Endothelial cell of umbilical vein (primary cell): ENCODE measurements at regions of chr9 and their contacts with region 1.

Region 1: GRCh38 chr9:135961277-135961705 is at the start of gene UBAC1:
- DNase-seq: peak; percentile 95
- H3K4me3 ChIP-seq: peak within 1 kb of the TSS; percentile 71 to 97 (median 78)
- H3K27ac ChIP-seq: no peak within 1 kb of the TSS
- H3K4me1 ChIP-seq: peaks cover 8% of the 10 kb centered on the region
- H3K27me3 ChIP-seq: no peaks in the 10 kb centered on the region
- CTCF ChIP-seq: peak; percentile 27 to 60
- POLR2A ChIP-seq: peak; percentile 32
- total RNA-seq, gene UBAC1: 36.5 and 39.5 TPM in 2 replicates

Region 2: DNA sequence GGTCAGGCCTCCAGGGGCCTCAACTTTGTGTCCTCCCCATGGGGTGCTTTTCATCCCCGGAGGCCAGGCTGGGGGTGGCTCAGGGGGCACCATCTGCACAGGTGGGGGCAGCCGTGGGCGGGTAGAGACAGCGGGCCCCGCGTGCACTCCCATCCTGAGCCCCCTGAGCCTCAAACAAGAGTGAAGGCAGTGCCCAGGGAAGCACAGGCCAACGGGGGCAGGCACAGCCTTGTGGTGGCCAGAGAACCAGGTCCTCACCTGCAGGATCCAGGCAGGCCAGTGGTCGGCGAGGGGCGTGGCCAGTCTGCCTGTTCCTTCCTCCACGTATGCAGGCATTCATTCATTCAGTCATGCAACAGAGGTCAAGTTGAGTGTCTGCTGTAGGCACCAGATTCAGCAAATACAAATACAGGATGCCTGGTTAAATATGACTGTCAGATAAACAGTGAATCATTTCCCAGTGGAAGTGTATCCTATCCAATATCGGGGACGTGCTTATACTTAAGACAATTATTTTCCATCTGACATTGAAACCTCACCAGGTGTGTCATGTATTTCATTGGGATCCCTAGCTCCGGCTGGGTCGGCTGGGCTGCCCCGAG is 237.0 kb before region 1 on chr9:
- CTCF ChIA-PET with region 1: no interaction called
- POLR2A ChIA-PET with region 1: no interaction called
- dilution Hi-C with region 1: no loop called
- intact Hi-C with region 1: loop called (anchors 5 kb)
- DNase-seq: peak; percentile 86
- H3K4me3 ChIP-seq: no peak overlapping the region
- H3K27ac ChIP-seq: peak overlapping the region; percentile 57
- H3K4me1 ChIP-seq: peaks cover 14% of the 10 kb centered on the region
- H3K27me3 ChIP-seq: no peaks in the 10 kb centered on the region
- CTCF ChIP-seq: no peak
- POLR2A ChIP-seq: peak; percentile 63

Region 3: GRCh38 chr9:135797507-135798262 is 163.6 kb before region 1 on chr9:
- CTCF ChIA-PET with region 1: interaction called, 4 read pairs
- POLR2A ChIA-PET with region 1: no interaction called
- dilution Hi-C with region 1: no loop called
- intact Hi-C with region 1: loop called (anchors 2 kb)
- DNase-seq: peak; percentile 29
- H3K4me3 ChIP-seq: no peak overlapping the region
- H3K27ac ChIP-seq: no peak overlapping the region
- H3K4me1 ChIP-seq: peaks cover 4% of the 10 kb centered on the region
- H3K27me3 ChIP-seq: no peaks in the 10 kb centered on the region
- CTCF ChIP-seq: peak; percentile 88 to 91
- POLR2A ChIP-seq: no peak

Region 4: DNA sequence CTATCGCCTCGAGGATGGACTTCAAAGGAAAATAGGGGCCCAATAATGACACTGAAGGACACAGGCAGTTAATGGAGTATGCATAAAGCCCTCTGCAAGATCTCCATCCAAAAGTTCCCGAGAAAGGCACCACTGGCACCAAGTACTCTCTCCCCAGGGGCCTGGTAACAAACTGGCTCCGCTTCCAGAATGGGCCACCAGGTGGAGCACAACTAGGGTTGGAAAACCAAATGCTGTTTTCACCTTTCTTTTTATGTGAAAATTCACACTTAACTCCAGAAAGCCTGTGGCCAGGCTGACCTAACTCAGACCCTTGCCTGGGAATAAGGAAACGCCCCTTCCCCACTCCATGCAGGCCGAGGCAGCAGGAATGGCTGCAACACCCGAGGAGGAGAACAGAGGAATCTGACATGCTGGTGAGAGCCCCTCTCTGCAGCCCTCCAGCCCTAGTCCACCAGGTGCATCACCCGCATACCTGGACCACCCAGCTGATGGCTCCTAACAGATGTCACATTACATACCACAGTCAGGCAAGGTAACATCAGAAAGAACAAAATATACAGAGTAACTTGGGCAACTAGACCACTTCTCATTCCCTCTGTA is 96.7 kb before region 1 on chr9:
- CTCF ChIA-PET with region 1: interaction called, 13 read pairs
- POLR2A ChIA-PET with region 1: no interaction called
- dilution Hi-C with region 1: no loop called
- intact Hi-C with region 1: loop called (anchors 2 kb)
- DNase-seq: peak; percentile 51
- H3K4me3 ChIP-seq: no peak overlapping the region
- H3K27ac ChIP-seq: no peak overlapping the region
- H3K4me1 ChIP-seq: no peaks in the 10 kb centered on the region
- H3K27me3 ChIP-seq: no peaks in the 10 kb centered on the region
- CTCF ChIP-seq: peak; percentile 86 to 87
- POLR2A ChIP-seq: no peak

Region 5: GRCh38 chr9:135907431-135908092 is 53.7 kb before region 1 on chr9 and contains the start of gene CAMSAP1:
- CTCF ChIA-PET with region 1: no interaction called
- POLR2A ChIA-PET with region 1: no interaction called
- dilution Hi-C with region 1: no loop called
- intact Hi-C with region 1: loop called (anchors 2 kb)
- DNase-seq: peak; percentile 95
- H3K4me3 ChIP-seq: peak within 1 kb of the TSS; percentile 42 to 84 (median 73)
- H3K27ac ChIP-seq: peak within 1 kb of the TSS; percentile 45
- H3K4me1 ChIP-seq: peaks cover 36% of the 10 kb centered on the region
- H3K27me3 ChIP-seq: no peaks in the 10 kb centered on the region
- CTCF ChIP-seq: no peak
- POLR2A ChIP-seq: peak; percentile 45
- total RNA-seq, gene CAMSAP1: 25.5 and 30.6 TPM in 2 replicates

Region 6: GRCh38 chr9:135978642-135979546 is 17.6 kb after region 1 on chr9:
- CTCF ChIA-PET with region 1: no interaction called
- POLR2A ChIA-PET with region 1: no interaction called
- dilution Hi-C with region 1: no loop called
- intact Hi-C with region 1: no loop called
- DNase-seq: no peak
- H3K4me3 ChIP-seq: no peak overlapping the region
- H3K27ac ChIP-seq: no peak overlapping the region
- H3K4me1 ChIP-seq: peaks cover 4% of the 10 kb centered on the region
- H3K27me3 ChIP-seq: no peaks in the 10 kb centered on the region
- CTCF ChIP-seq: no peak
- POLR2A ChIP-seq: no peak

Region 7: DNA sequence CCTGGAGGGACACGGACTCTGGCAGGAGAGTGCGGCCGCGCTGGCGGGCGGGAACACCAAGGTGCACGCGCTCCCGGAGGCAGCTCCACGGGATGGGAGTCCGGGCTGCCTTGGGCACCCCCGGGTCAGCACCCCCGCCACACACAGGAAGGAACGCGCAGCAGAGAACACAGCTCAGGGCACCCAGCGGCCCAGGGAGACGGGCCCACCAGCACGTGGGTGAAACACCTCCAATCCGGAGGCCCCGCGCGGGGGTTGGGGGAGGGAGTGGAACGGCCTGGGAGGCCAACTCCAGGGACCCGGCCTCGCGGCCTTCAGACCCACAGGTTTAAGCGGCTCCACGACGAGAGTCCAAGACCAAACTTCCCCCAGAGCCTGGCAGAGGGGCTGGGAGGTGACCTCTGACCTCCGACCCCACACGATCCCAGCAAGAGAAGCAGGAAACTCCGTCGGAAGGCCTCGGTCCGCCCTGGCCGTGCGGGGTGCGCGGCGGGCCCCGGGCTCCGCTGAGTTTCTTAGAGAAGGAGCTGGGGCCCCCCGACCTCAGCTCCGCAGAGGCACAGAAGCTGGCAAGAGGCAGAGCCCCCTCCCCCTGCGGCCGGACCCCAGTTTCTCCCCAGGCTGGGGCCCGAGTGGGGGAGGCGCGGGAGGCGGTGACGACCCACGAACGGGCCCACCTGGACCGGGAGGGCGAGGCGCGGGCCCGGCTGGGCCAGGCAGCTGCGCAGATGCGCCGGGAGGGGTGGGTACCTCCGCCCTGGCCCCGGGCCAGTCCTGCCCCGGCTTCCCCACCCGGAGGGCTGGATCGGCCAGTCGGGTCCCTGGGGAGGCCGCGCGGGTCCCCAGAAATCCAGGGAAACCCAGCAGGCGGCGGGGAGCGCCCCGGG is 132.9 kb after region 1 on chr9:
- CTCF ChIA-PET with region 1: interaction called, 44 read pairs
- POLR2A ChIA-PET with region 1: no interaction called
- dilution Hi-C with region 1: no loop called
- intact Hi-C with region 1: no loop called
- DNase-seq: peak; percentile 33
- H3K4me3 ChIP-seq: peak overlapping the region; percentile 58 to 86 (median 68)
- H3K27ac ChIP-seq: peak overlapping the region; percentile 64
- H3K4me1 ChIP-seq: peaks cover 19% of the 10 kb centered on the region
- H3K27me3 ChIP-seq: no peaks in the 10 kb centered on the region
- CTCF ChIP-seq: no peak
- POLR2A ChIP-seq: peak; percentile 17

Region 8: GRCh38 chr9:136283291-136284235 is 322.3 kb after region 1 on chr9:
- CTCF ChIA-PET with region 1: no interaction called
- POLR2A ChIA-PET with region 1: no interaction called
- dilution Hi-C with region 1: no loop called
- intact Hi-C with region 1: loop called (anchors 10 kb)
- DNase-seq: peak; percentile 75
- H3K4me3 ChIP-seq: no peak overlapping the region
- H3K27ac ChIP-seq: no peak overlapping the region
- H3K4me1 ChIP-seq: no peaks in the 10 kb centered on the region
- H3K27me3 ChIP-seq: peaks cover 0 to 2% of the 10 kb centered on the region in 2 experiments
- CTCF ChIP-seq: peak; percentile 83 to 92
- POLR2A ChIP-seq: no peak